ENCODE measurements at regions of chr7 and their contacts with region 1.

Region 1: DNA sequence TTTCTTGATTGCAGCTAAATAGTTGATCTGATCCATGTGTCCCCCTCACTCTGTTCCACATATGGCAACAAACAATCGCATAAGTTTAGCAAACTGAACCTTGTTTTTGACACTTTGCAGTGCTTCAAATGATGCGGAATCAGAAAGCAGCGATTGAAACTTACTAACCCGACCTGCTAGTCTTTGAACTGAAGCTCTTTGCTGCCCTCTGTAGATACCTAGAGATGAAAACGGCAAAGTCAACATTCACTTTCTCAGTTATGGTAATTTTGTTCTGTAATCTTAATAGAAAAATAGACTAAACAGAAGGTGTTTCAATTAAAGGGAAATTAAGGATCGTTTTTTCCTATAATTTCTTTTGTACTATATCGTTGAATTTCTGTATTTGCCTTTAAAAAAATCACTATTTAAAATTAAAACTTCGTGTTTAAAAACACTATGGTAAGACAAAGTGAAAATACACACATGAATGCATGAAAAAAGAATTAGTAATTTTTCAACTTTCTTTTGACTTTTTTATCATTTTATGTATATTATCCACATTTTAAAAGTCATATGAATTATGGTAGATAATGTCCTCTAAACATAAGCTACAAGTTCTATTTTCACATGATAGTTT is 276.5 kb downstream of the MAGI2 start:
- DNase-seq: no peak
- H3K4me3 ChIP-seq: no peak overlapping the region
- H3K27ac ChIP-seq: no peak overlapping the region
- H3K4me1 ChIP-seq: no peaks in the 10 kb centered on the region
- H3K27me3 ChIP-seq: no peaks in the 10 kb centered on the region
- CTCF ChIP-seq: peak; percentile 21 to 50 (median 26)
- POLR2A ChIP-seq: no peak

Region 2: GRCh38 chr7:78020136-78020873 is 1156.7 kb before region 1 on chr7:
- intact Hi-C with region 1: loop called (anchors 10 kb)
- DNase-seq: no peak
- H3K4me3 ChIP-seq: peak overlapping the region; percentile 48 to 76 (median 66)
- H3K27ac ChIP-seq: peak overlapping the region; percentile 92 to 99 (median 98)
- H3K4me1 ChIP-seq: peaks cover 10 to 37% (median 12%) of the 10 kb centered on the region in 3 donors
- H3K27me3 ChIP-seq: no peaks in the 10 kb centered on the region
- CTCF ChIP-seq: peak in 5 of 6 experiments; percentile 58 to 74 (median 65)
- POLR2A ChIP-seq: no peak

Region 3: GRCh38 chr7:79598351-79598750 is 421.4 kb after region 1 on chr7:
- intact Hi-C with region 1: no loop called
- DNase-seq: no peak
- H3K4me3 ChIP-seq: no peak overlapping the region
- H3K27ac ChIP-seq: no peak overlapping the region
- H3K4me1 ChIP-seq: no peaks in the 10 kb centered on the region
- H3K27me3 ChIP-seq: no peaks in the 10 kb centered on the region
- CTCF ChIP-seq: no peak
- POLR2A ChIP-seq: no peak

Region 4: GRCh38 chr7:79933144-79933543 is 756.2 kb after region 1 on chr7:
- intact Hi-C with region 1: no loop called
- DNase-seq: no peak
- H3K4me3 ChIP-seq: no peak overlapping the region
- H3K27ac ChIP-seq: no peak overlapping the region
- H3K4me1 ChIP-seq: no peaks in the 10 kb centered on the region
- H3K27me3 ChIP-seq: no peaks in the 10 kb centered on the region
- CTCF ChIP-seq: no peak
- POLR2A ChIP-seq: no peak